Panc1 (cell line): ENCODE measurements at regions of chr20 and their contacts with region 1.

Region 1: GRCh38 chr20:36035745-36036144 is 67.4 kb downstream of the CNBD2 start:
- DNase-seq: no peak
- ATAC-seq: peak; percentile 61; the same call in 1 of the 2 replicates
- H3K4me3 ChIP-seq: no peak overlapping the region
- H3K27ac ChIP-seq: no peak overlapping the region
- H3K4me1 ChIP-seq: no peaks in the 10 kb centered on the region
- H3K27me3 ChIP-seq: no peaks in the 10 kb centered on the region
- CTCF ChIP-seq: no peak

Region 2: DNA sequence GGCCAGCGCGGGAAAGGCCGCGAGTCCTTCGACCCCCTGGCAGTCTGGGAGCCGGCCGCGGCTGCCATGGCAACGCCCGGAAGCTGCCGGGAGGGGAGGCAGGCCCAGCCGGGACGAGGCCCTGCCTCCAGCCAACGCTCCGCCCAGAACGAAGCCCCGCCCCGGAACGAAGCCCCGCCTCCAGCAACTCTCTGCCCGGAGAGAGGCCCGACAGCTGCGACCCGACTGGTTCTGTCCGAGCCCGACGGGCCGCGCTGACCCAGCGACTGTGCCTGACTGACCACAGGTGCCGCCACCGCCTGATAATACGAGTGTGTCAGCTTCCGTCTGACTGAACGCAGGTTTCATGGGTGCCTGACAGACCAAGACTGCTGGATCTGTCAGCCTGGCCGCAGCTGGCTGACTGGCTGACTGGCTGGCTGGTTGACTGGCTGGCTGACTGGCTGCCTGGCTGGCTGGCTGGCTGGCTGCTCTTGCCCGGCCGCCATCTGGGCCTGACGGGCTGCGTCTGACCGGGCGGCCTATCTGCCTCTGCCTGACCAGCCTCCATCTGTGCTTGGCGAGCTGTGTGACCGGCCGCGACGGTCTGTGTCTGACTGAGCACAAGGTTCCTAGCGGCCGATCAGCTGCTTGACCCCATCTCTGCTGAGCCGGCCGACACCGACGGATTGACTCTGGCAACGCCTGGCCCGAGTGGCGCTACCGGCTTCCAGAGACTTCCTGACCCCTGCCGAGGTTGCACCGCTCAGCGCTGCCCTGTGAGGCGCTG is 29.1 kb after region 1 on chr20:
- CTCF ChIA-PET with region 1: no interaction called
- POLR2A ChIA-PET with region 1: interaction called, 11 read pairs
- in situ Hi-C with region 1: no loop called
- intact Hi-C with region 1: no loop called
- DNase-seq: peak; percentile 35
- ATAC-seq: peak; percentile 98
- H3K4me3 ChIP-seq: peak overlapping the region; percentile 66 to 69
- H3K27ac ChIP-seq: peak overlapping the region; percentile 46; the same call in 1 of the 2 replicates
- H3K4me1 ChIP-seq: no peaks in the 10 kb centered on the region
- H3K27me3 ChIP-seq: no peaks in the 10 kb centered on the region
- CTCF ChIP-seq: no peak